Sigmoid colon (tissue), 7 donors: ENCODE measurements at regions of chr1 and their contacts with region 1.

Region 1: DNA sequence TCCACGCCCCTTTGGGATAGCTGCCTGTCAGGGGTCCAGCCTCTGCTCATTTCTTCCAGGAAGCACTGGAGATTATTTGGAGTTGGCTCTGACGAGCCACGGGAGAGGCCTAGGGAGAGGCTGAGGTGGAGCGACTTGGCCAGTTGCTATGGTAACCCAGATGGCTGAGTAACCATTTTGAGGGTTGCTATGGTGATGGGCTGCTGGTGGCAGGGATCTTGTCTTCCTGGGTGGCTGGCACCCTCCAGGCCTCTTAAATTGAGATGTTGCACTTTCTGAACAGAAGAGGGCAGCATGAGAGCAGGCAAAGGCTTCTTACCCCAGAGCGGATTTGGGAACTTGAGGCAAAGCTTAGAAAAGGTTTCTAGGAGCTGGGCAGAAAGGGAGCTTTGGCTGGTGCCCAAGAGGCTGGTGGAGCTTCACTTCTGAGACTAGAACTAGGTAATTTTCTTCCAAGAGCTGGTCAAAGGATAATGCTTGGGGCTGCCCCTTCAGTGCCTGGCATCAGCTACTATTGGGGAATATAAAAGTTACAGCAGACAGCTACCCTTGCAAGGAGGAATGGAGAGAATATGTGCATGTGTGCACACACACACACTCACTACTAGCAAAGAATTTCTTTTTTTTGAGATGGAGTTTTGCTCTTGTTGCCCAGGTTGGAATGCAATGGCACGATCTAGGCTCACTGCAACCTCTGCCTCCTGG is 72.5 kb downstream of the NDUFS5 start:
- DNase-seq: peak; percentile 83
- H3K4me3 ChIP-seq: no peak overlapping the region
- H3K27ac ChIP-seq: no peak overlapping the region
- H3K4me1 ChIP-seq: peaks cover 0 to 27% (median 22%) of the 10 kb centered on the region in 4 donors
- H3K27me3 ChIP-seq: no peaks in the 10 kb centered on the region
- CTCF ChIP-seq: peak; percentile 41 to 78 (median 66)
- EP300 ChIP-seq: no peak
- POLR2A ChIP-seq: no peak

Region 2: GRCh38 chr1:38859561-38860453 is 238.9 kb before region 1 on chr1 and contains the start of gene RRAGC:
- intact Hi-C with region 1: loop called (anchors 10 kb)
- DNase-seq: peak; percentile 100
- H3K4me3 ChIP-seq: peak within 1 kb of the TSS; percentile 73 to 99 (median 98)
- H3K27ac ChIP-seq: peak within 1 kb of the TSS; percentile 87 to 96 (median 92)
- H3K4me1 ChIP-seq: peaks cover 0 to 76% (median 51%) of the 10 kb centered on the region in 4 donors
- H3K27me3 ChIP-seq: no peaks in the 10 kb centered on the region
- CTCF ChIP-seq: no peak
- EP300 ChIP-seq: peak in 2 of 4 donors; percentile 63 to 71
- POLR2A ChIP-seq: peak; percentile 45 to 57
- total RNA-seq, gene RRAGC: 18.2 to 24.9 (median 23.7) TPM

Region 3: GRCh38 chr1:39196244-39197215 is 97.8 kb after region 1 on chr1:
- intact Hi-C with region 1: loop called (anchors 1 kb)
- DNase-seq: no peak
- H3K4me3 ChIP-seq: no peak overlapping the region
- H3K27ac ChIP-seq: peak overlapping the region; percentile 83 to 95 (median 90)
- H3K4me1 ChIP-seq: peaks cover 0 to 74% (median 70%) of the 10 kb centered on the region in 4 donors
- H3K27me3 ChIP-seq: no peaks in the 10 kb centered on the region
- CTCF ChIP-seq: no peak
- EP300 ChIP-seq: no peak
- POLR2A ChIP-seq: no peak

Region 4: DNA sequence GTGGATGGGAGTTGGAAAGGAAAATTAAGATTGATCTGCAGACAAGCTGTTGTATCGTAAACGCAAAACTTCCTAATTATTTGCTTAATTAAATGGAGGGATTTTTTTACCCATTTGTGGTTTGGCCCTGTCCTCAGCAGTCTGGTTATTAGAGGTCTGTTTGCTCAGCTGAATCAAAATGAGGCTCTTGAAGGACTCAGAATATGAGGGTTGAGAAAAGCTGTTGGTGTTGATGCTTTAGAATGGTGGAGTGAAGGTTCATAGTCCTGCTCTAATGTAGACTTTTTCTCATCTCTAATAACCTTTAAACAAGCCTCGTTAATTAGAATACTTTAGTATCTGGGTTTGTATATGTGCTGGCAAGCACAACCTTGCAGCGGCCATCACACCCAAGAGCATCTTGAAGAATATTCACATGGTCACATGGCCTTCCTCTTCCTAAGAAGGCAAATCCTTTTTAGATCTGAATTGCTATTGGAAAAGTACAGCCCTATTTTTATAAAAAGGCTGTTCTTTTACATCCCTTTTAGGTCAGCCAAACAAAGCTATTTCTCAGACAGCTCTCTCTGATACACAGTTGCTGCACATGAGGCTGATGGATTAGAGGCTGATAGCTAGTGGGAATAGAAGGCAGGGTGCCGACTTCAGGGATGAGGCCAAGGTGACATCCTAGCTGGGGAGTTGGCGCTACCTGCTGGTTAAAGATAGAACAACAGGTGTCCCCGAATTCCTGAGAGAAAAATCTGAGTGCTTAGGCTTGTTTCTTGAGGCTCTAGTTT is 159.6 kb after region 1 on chr1:
- intact Hi-C with region 1: loop called (anchors 2 kb)
- DNase-seq: peak; percentile 93
- H3K4me3 ChIP-seq: no peak overlapping the region
- H3K27ac ChIP-seq: peak overlapping the region; percentile 63 to 82 (median 64)
- H3K4me1 ChIP-seq: peaks cover 0 to 55% (median 32%) of the 10 kb centered on the region in 4 donors
- H3K27me3 ChIP-seq: no peaks in the 10 kb centered on the region
- CTCF ChIP-seq: peak; percentile 84 to 90 (median 88)
- EP300 ChIP-seq: no peak
- POLR2A ChIP-seq: no peak

Region 5: DNA sequence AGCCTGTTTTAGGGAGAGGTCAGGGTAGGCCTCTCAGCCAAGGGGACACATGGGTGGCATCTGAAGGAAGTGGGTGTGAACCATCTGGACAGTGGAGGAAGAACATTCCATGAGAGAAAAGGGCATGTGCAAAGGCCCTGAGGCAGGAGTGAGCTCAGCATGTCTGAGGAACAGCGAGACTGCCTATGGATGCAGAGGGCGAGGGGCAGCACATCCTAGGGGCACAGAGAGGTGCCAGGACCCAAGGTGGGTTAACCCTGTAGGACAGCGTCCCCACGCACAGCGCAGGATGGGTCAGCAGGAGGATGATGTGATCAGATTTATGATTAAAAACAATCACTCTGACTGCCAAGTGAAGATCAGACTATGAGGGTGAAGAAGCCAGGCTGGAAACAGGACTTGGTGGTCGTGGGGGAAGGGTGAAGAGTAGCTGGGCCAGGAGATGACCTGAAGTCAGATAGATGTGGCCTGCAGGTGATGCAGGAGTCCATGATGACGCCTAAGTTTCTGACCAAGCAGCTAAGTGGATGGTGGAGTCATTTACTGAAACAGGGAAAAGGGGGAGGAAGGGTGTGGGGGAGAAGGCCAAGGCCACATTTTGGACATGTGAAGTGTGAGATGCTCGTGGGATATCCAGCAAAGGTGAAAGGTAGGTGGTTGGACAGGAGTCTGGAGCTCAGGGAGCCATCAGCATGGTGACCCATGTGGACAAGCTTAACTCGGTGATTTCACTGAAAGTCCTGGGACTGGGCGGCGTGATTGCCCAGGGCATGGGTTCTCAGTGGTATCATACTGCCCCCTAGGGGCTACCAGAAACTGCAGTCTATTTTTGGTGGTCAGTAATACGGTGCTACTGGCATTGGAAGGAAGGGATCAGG is 440.1 kb after region 1 on chr1:
- intact Hi-C with region 1: loop called (anchors 2 kb)
- DNase-seq: peak; percentile 86
- H3K4me3 ChIP-seq: no peak overlapping the region
- H3K27ac ChIP-seq: no peak overlapping the region
- H3K4me1 ChIP-seq: peaks cover 0 to 5% (median 2%) of the 10 kb centered on the region in 4 donors
- H3K27me3 ChIP-seq: no peaks in the 10 kb centered on the region
- CTCF ChIP-seq: peak; percentile 71 to 92 (median 80)
- EP300 ChIP-seq: no peak
- POLR2A ChIP-seq: no peak